K562 (cell line): ENCODE measurements at regions of chr6 and their contacts with region 1.

Region 1: DNA sequence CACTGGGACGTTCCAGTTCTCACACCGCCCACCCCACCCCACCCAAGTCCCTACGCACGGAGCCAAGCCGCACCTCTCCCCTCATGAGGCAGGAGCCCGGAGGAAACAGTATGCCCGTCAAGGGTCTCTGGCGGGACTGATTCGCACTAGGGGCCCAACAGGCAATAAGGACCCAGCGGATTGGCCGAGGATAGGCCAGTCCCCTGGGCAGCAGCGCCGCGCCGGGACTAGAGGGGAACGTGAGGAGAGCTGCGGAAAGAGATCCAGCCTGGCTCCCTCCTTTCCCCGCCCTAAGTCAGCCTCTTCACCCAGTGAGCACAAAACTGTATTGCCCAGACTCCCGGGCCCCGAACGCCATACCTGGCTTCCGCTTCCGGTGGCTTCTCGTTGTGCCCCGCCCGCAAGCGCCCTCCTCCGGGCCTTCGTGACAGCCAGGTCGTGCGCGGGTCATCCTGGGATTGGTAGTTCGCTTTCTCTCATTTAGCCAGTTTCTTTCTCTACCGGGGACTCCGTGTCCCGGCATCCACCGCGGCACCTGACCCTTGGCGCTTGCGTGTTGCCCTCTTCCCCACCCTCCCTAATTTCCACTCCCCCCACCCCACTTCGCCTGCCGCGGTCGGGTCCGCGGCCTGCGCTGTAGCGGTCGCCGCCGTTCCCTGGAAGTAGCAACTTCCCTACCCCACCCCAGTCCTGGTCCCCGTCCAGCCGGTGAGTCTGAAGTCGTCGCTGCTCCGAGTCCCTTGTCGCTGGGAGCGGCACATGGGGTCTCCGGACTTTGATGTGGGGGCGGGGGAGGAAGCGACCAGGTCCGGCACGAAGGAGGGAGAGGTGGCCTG is at the start of gene CSNK2B:
- DNase-seq: peak; percentile 98 to 100 (median 99)
- ATAC-seq: peak; percentile 85
- H3K4me3 ChIP-seq: peak within 1 kb of the TSS; percentile 66
- H3K27ac ChIP-seq: peak within 1 kb of the TSS; percentile 97
- H3K4me1 ChIP-seq: peaks cover 36 to 39% of the 10 kb centered on the region in 2 experiments; a peak in 4 of 5 replicates
- H3K27me3 ChIP-seq: no peaks in the 10 kb centered on the region
- CTCF ChIP-seq: peak; percentile 18 to 42 (median 33); a peak in 4 of 6 replicates
- EP300 ChIP-seq: peak; percentile 47
- POLR2A ChIP-seq: peak; percentile 99
- RAD21 ChIP-seq: no peak
- polyA plus RNA-seq, gene CSNK2B: 870 to 972 TPM

Region 2: GRCh38 chr6:31426395-31427354 is 239.0 kb before region 1 on chr6:
- CTCF ChIA-PET with region 1: no interaction called
- POLR2A ChIA-PET with region 1: no interaction called
- in situ Hi-C with region 1: no loop called
- intact Hi-C with region 1: no loop called
- DNase-seq: no peak
- ATAC-seq: no peak
- H3K4me3 ChIP-seq: no peak overlapping the region
- H3K27ac ChIP-seq: no peak overlapping the region
- H3K4me1 ChIP-seq: no peaks in the 10 kb centered on the region
- H3K27me3 ChIP-seq: peaks cover 0 to 13% of the 10 kb centered on the region in 2 experiments; a peak in 2 of 5 replicates
- CTCF ChIP-seq: no peak
- EP300 ChIP-seq: no peak
- POLR2A ChIP-seq: no peak
- RAD21 ChIP-seq: no peak

Region 3: GRCh38 chr6:31631681-31632278 is 33.9 kb before region 1 on chr6:
- CTCF ChIA-PET with region 1: no interaction called
- POLR2A ChIA-PET with region 1: interaction called, 20 read pairs
- in situ Hi-C with region 1: no loop called
- intact Hi-C with region 1: no loop called
- DNase-seq: no peak
- ATAC-seq: peak; percentile 32
- H3K4me3 ChIP-seq: no peak overlapping the region
- H3K27ac ChIP-seq: no peak overlapping the region
- H3K4me1 ChIP-seq: peaks cover 0 to 26% of the 10 kb centered on the region in 2 experiments; a peak in 1 of 5 replicates
- H3K27me3 ChIP-seq: no peaks in the 10 kb centered on the region
- CTCF ChIP-seq: no peak
- EP300 ChIP-seq: no peak
- POLR2A ChIP-seq: no peak
- RAD21 ChIP-seq: no peak

Region 4: GRCh38 chr6:31689249-31690110 is 23.8 kb after region 1 on chr6:
- CTCF ChIA-PET with region 1: interaction called, 3 read pairs
- POLR2A ChIA-PET with region 1: interaction called, 32 read pairs
- in situ Hi-C with region 1: no loop called
- intact Hi-C with region 1: no loop called
- DNase-seq: peak in 2 of 4 experiments; percentile 66 to 72
- ATAC-seq: peak; percentile 60
- H3K4me3 ChIP-seq: no peak overlapping the region; the same call in 1 of the 2 replicates
- H3K27ac ChIP-seq: peak overlapping the region; percentile 88
- H3K4me1 ChIP-seq: peaks cover 63 to 65% of the 10 kb centered on the region in 2 experiments
- H3K27me3 ChIP-seq: no peaks in the 10 kb centered on the region
- CTCF ChIP-seq: peak; percentile 63 to 96 (median 68)
- EP300 ChIP-seq: no peak
- POLR2A ChIP-seq: no peak
- RAD21 ChIP-seq: peak in 1 of 2 experiments; percentile 45; a peak in 2 of 4 replicates

Region 5: DNA sequence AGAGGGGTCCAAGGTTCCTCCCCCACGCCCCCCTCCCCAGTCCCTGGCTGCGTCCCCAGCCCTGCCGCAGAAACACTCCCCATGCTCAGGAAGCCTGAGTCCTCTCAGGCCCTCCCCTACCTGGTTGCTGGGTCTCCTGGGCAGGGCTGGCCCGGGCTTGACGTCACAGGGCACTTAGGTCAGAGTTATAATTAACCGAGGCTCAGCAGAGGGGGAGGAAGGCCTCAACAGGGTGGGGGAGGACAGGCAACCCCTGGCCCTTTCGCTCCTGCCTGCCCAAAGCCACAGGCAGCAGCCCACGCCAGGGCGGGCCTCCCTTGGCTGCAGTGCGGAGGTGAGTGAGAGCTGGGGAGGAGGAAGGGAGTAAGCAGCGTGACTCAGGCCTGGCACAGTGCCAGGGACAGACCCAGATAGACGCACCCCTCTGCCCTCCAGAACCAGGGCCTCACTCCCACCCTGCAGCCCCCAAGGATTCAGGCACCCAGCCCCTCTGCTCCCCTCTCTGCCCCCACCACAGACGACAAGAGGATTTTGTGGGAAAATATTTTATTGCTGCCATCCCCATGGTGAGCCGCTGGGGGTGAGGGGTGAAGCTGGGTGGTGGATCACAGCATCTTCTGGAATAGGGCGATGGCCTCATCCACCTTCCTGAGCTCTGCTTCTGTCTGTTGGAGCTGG is 111.4 kb after region 1 on chr6 and contains the start of gene VWA7:
- CTCF ChIA-PET with region 1: no interaction called
- POLR2A ChIA-PET with region 1: interaction called, 12 read pairs
- in situ Hi-C with region 1: no loop called
- intact Hi-C with region 1: no loop called
- DNase-seq: peak; percentile 98 to 99 (median 99)
- ATAC-seq: peak; percentile 91
- H3K4me3 ChIP-seq: peak within 1 kb of the TSS; percentile 10; the same call in 1 of the 2 replicates
- H3K27ac ChIP-seq: peak within 1 kb of the TSS; percentile 87
- H3K4me1 ChIP-seq: peaks cover 43 to 85% of the 10 kb centered on the region in 2 experiments
- H3K27me3 ChIP-seq: no peaks in the 10 kb centered on the region
- CTCF ChIP-seq: peak; percentile 14 to 44 (median 24); a peak in 2 of 6 replicates
- EP300 ChIP-seq: peak; percentile 88
- POLR2A ChIP-seq: peak; percentile 84; the same call in 1 of the 2 replicates
- RAD21 ChIP-seq: peak; percentile 46 to 80
- polyA plus RNA-seq, gene VWA7: 0.18 to 0.32 TPM

Region 6: DNA sequence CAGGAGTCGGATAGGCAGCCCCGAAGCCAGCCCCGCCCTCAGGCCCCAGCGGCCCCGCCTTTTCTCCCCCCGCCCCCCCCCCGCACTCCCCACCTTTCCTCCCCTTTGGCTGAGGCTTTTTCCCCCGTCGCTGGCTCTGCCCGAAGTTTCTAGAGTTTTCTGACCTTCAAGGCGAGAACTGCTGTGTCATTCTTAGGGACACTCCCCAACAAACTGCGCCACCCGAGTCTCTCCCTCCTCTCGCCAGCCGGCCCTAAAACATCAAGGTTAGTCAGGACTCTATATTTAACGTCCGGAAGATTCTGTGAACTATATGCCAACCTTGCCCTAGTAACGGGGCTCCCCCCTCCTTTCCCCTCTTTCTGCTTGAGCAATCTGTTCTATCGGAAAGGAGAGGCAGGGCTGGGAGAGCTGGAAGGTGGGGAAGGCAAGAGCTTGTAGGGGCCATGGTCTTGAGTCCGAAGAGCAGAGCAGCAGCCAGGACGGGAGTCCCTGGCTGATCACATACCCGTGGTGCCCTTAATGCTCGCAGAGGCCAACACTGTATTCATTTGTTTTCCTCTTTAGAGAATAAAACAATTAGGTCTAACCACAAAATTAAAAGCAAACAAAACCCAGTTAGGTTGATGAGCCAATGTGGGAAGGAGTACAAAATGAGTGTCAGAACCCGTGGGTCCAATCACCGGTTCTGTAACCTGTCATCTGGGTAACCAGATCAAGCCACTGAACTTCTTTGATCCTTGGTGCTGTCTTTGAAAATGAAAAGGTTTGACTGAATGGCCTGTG is 156.5 kb after region 1 on chr6:
- CTCF ChIA-PET with region 1: no interaction called
- POLR2A ChIA-PET with region 1: interaction called, 60 read pairs
- in situ Hi-C with region 1: no loop called
- intact Hi-C with region 1: no loop called
- DNase-seq: peak; percentile 95 to 100 (median 96)
- ATAC-seq: peak; percentile 77
- H3K4me3 ChIP-seq: peak overlapping the region; percentile 59
- H3K27ac ChIP-seq: peak overlapping the region; percentile 99
- H3K4me1 ChIP-seq: peaks cover 51 to 58% of the 10 kb centered on the region in 2 experiments
- H3K27me3 ChIP-seq: no peaks in the 10 kb centered on the region
- CTCF ChIP-seq: no peak; a peak in 1 of 6 replicates
- EP300 ChIP-seq: peak; percentile 77
- POLR2A ChIP-seq: peak; percentile 91
- RAD21 ChIP-seq: no peak; a peak in 1 of 4 replicates

Region 7: DNA sequence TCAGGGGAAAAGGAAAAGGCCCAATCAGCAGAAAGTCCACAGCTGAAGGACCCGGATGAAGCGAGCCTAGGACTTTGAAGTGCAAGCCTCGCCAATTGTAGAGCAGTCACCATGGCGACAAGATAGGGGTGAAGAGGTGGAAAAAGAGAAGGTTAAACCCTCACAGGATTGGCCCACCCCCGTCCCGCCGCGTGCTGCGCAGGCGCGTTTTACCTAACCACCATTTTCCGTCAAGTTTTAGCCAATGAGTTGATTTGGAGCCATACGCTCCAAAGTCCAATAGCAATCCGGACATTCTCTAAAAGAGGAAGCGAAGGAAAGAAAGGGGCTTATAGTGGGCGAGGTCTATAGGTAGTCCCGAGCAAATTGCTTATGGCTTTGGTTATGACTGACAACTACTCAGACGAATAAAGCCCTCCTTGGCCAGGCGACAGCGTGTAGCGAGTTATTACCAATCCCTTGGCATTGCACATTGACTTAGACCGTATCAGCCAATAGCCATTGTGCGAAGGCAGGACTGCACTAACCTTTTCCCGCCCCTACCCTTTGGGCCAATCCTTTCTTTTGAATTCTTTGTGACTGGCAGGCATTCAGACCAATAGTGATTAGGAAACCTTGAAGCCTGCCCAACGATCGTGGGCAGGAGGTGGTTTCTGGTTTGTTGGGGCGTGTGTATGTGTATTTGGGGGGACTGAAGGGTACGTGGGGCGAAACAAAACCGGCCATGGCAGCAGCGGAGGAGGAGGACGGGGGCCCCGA is 512.2 kb after region 1 on chr6 and contains the start of gene RNF5:
- CTCF ChIA-PET with region 1: no interaction called
- POLR2A ChIA-PET with region 1: no interaction called
- in situ Hi-C with region 1: no loop called
- intact Hi-C with region 1: loop called (anchors 10 kb)
- DNase-seq: peak; percentile 95 to 100 (median 97)
- ATAC-seq: peak; percentile 85
- H3K4me3 ChIP-seq: peak within 1 kb of the TSS; percentile 88
- H3K27ac ChIP-seq: peak within 1 kb of the TSS; percentile 94
- H3K4me1 ChIP-seq: peaks cover 40 to 65% of the 10 kb centered on the region in 2 experiments
- H3K27me3 ChIP-seq: no peaks in the 10 kb centered on the region
- CTCF ChIP-seq: no peak
- EP300 ChIP-seq: no peak; the same call in 1 of the 2 replicates
- POLR2A ChIP-seq: peak; percentile 77
- RAD21 ChIP-seq: no peak
- polyA plus RNA-seq, gene RNF5: 62.2 to 95.5 TPM